ENCODE measurements at regions of chr11 and their contacts with region 1.

Region 1: GRCh38 chr11:2885676-2886081 is at the start of gene CDKN1C:
- DNase-seq: peak; percentile 88 to 91
- ATAC-seq: peak; percentile 72 to 84 (median 80)
- H3K4me3 ChIP-seq: peak within 1 kb of the TSS; percentile 63 to 89 (median 78)
- H3K27ac ChIP-seq: peak within 1 kb of the TSS; percentile 80 to 94 (median 86)
- H3K4me1 ChIP-seq: peaks cover 5 to 55% (median 39%) of the 10 kb centered on the region in 9 donors
- H3K27me3 ChIP-seq: peaks cover 0 to 34% (median 0%) of the 10 kb centered on the region in 7 donors
- CTCF ChIP-seq: no peak
- total RNA-seq, gene CDKN1C: 16.9 to 48.0 (median 25.4) TPM

Region 2: GRCh38 chr11:2196970-2197770 is 688.5 kb before region 1 on chr11:
- intact Hi-C with region 1: loop called in 3 of 10 experiments (anchors 10 kb)
- DNase-seq: peak; percentile 66 to 76
- ATAC-seq: peak; percentile 59 to 86 (median 80)
- H3K4me3 ChIP-seq: no peak overlapping the region
- H3K27ac ChIP-seq: no peak overlapping the region
- H3K4me1 ChIP-seq: peaks cover 0 to 11% (median 0%) of the 10 kb centered on the region in 9 donors
- H3K27me3 ChIP-seq: peaks cover 0 to 12% (median 7%) of the 10 kb centered on the region in 7 donors
- CTCF ChIP-seq: peak; percentile 53 to 85 (median 81)

Region 3: DNA sequence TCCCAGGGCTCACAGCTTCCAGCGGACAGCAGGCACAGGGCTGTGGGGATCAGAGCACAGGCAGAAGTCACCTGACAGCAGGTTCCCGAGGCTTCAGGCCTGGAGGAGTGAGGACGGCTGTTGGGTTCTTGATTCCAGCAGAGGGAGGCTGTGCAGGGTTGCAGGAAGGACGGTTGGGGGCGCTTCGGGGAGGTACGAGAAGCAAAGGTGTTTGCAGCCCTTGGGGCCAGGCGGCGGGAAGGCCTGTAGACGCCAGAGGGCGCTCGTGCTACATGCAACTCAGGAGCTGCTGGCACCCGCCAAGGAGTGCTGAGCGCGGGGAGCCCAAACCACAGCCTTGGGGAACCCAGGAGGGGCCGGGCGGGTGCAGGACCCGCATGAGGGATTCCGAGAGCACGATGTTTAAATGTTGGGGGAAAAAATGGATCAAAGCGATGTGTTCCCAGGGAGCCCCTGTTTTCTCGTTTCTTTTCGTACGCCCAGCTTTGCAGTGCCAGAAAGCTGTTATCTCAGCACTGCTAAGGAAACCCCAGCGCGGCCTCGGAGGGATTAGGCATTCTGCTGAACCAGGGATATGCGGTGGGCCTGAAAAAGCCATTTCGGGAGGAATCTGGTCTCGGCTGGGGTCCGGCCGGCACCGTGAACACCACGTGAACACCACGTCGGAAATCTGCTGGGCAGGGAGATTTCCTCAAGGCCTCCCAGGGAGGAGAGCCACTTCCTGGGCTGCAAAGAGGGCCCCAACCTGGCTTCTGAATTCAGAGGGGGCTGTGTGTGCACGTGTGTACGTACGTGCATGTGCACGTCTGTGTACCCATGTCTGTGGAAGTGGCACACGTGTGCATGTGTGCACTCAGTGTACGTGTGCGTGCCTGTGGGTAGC is 352.7 kb before region 1 on chr11:
- intact Hi-C with region 1: loop called in 9 of 10 experiments (anchors 1 to 2 kb)
- DNase-seq: peak; percentile 89 to 93
- ATAC-seq: peak; percentile 76 to 95 (median 88)
- H3K4me3 ChIP-seq: peak overlapping the region in 6 of 10 donors; percentile 23 to 48 (median 38)
- H3K27ac ChIP-seq: peak overlapping the region in 9 of 10 donors; percentile 1 to 69 (median 54)
- H3K4me1 ChIP-seq: peaks cover 13 to 28% (median 21%) of the 10 kb centered on the region in 9 donors
- H3K27me3 ChIP-seq: no peaks in the 10 kb centered on the region
- CTCF ChIP-seq: peak; percentile 99 to 100 (median 99)

Region 4: DNA sequence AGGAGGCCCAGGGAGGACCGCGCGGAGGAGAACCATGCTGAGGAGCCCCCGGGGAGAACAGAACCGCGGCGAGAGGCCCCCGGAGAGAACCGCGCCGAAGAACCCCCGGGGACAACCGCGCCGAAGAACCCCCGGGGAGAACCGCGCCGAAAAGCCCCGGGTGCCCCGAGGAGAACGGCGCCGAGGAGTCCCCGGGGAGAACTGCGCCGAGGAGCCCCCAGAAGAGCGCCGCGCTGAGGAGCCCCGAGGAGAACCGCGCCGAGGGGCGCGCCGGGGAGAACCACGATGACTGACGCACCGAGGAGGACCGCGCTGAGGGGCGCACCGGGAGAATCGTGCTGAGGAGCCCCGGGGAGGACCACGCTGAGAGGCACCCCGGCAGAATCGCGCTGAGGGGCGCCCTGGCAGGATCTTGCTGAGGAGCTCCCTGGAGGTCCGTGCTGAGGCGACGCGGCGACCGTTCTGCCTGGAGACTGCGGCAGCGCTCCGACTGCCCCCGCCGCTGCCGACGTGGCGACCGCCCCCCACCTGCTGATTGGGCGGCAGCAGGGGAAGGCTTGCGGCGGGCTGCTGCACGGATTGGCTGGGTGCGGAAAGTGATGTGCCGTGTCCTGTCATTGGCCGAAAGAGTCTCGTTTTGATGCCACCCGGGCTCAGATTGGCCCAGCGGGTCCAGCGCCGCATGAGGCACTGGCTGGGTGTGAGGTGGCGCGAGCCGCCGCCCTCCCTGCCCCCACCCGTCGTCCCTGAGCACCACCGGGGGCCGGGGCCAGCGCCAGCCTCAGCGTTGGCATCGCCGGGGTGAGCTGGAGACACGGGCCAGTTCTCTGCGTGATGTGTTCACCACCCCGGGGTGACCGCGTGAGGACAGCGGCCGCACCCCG is 185.9 kb before region 1 on chr11 and contains the start of gene KCNQ1OT1:
- intact Hi-C with region 1: loop called in 7 of 10 experiments (anchors 5 to 10 kb)
- DNase-seq: peak; percentile 88 to 90
- ATAC-seq: peak; percentile 92 to 97 (median 96)
- H3K4me3 ChIP-seq: peak within 1 kb of the TSS; percentile 50 to 83 (median 76)
- H3K27ac ChIP-seq: peak within 1 kb of the TSS; percentile 67 to 96 (median 94)
- H3K4me1 ChIP-seq: peaks cover 0 to 42% (median 18%) of the 10 kb centered on the region in 9 donors
- H3K27me3 ChIP-seq: no peaks in the 10 kb centered on the region
- CTCF ChIP-seq: peak in 1 of 9 donors; percentile 10
- total RNA-seq, gene KCNQ1OT1: 0.28 to 0.56 (median 0.43) TPM

Region 5: DNA sequence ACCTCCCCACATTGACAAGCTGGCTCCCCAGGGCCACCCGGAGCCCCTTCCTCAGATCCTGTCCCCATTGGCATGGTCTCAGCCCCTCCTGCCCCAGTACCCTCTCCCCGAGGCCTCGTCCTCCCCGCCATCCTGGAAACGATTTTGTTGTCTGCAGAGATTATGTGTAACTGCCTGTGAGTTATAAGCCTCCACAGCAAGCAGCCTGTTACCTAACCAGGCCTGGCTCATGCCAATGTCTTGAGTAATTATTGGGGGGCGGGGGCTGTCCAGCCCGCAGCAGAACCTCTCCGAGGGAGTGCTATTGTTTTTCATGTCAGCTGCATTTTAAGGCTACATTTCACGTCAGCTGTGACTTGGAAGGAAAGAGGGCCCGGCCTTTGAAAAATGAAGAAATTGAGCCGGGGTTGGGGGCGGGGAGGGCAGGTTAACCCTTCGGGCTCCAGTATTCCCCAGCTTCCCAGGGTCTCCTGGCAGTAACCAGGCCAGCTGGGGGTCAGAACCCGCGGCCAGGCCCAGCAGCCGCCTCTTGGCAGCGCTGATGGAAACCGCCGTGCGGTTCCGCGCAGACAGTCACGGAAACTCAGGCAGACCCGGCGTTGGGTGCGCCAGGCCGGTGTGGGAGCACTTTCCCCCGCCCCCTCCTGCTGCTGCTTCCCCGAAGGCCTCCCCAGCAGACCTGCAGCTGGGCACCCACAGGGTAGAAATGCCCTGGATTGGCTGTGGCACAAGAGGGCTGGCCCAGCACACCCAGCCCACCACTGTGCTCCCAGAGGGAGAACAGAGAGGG is 59.6 kb before region 1 on chr11:
- intact Hi-C with region 1: loop called in 4 of 10 experiments (anchors 2 to 5 kb)
- DNase-seq: peak; percentile 64 to 65
- ATAC-seq: peak; percentile 69 to 80 (median 74)
- H3K4me3 ChIP-seq: peak overlapping the region in 1 of 10 donors; percentile 22
- H3K27ac ChIP-seq: peak overlapping the region; percentile 83 to 96 (median 89)
- H3K4me1 ChIP-seq: peaks cover 27 to 65% (median 42%) of the 10 kb centered on the region in 9 donors
- H3K27me3 ChIP-seq: no peaks in the 10 kb centered on the region
- CTCF ChIP-seq: no peak

Measured in heart right ventricle (tissue), 16 donors.